ENCODE measurements at regions of chr16 and their contacts with region 1.

Region 1: GRCh38 chr16:66382171-66382965 is 15.9 kb downstream of the CDH5 start:
- DNase-seq: peak in 3 of 5 donors; percentile 50 to 64 (median 60)
- ATAC-seq: peak; percentile 53 to 91 (median 76)
- H3K4me3 ChIP-seq: peak overlapping the region in 4 of 12 donors; percentile 3 to 6 (median 4)
- H3K27ac ChIP-seq: peak overlapping the region; percentile 59 to 88 (median 80)
- H3K4me1 ChIP-seq: peaks cover 0 to 51% (median 23%) of the 10 kb centered on the region in 12 donors
- H3K27me3 ChIP-seq: no peaks in the 10 kb centered on the region
- CTCF ChIP-seq: peak in 4 of 12 donors; percentile 13 to 19 (median 18)
- POLR2A ChIP-seq: no peak

Region 2: DNA sequence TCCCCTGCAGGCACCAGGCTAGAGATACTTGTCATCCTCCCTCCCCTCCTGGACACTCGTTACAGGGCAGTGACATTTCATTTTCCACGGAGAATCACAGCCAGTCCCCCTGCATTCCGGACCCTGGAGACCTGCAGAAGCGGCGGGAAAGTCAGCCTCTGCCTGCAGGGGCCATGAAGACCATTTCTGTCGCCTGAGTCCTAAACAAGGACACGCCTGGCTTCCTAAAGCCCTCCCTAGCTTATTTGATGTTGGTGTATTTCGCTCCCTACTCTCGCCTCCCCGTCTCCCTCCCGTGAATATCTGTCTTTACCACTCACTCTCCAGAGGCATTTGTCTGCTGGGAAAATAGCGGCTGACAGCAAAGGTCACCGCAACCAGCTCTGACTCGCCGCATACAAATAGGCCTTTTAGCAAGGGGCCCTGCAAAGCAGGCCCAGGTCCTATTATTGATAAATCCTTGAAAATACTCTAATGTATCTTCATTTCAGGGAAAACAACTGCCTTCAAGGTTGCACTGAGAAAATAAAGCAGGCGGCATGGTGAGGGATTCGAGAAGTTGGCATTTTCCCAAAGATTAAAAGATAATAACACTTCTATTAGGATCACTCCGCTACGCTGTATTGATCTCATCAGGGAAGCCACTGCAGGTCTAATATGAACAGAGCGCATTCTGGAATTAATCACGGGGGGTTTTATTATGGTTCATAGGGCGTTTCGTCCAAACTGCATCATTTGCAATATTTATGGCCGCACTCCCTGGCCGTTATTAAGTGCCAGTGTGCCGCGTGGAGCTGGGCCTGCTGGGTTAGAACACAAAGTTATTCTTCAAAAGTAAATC is 463.0 kb before region 1 on chr16:
- intact Hi-C with region 1: no loop called
- DNase-seq: no peak
- ATAC-seq: no peak
- H3K4me3 ChIP-seq: no peak overlapping the region
- H3K27ac ChIP-seq: no peak overlapping the region
- H3K4me1 ChIP-seq: no peaks in the 10 kb centered on the region
- H3K27me3 ChIP-seq: peaks cover 0 to 24% (median 0%) of the 10 kb centered on the region in 9 donors
- CTCF ChIP-seq: no peak
- POLR2A ChIP-seq: no peak

Region 3: DNA sequence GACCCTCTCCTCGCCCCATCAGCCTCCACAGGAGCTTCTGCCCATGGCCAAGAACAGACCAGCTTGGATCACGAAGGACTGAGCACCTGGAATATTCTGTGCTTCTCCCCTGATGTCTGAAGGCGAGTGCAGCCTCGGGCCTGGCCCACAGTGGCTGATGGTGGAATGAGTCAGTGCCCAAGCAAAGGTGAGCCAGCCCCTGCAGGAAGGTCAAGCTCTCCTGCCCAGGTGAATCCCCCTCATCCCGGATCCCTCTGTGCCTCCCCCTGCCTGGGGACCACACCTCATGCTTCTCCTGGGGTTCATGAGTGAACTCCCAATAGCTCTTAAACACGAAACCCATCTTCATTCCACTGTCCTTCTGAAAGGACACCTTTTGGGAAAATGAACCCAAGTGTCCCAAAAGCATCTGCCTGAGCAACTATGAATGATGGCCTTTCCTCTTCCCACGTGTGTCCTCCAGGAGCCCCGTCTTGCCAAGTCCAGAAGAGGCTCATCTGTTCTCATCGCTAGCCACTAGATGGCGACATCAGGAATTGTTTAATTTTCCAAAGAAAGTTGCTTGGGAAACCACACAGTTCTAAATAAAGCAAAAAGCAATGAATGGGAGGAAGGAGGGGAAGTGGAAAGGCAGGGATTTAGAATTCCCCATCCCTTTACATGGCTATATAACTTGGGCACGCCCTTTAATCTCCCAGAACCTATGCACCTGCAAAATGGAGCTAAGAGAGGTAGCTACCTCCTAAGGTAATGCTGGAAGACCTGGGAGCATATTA is 25.0 kb before region 1 on chr16:
- intact Hi-C with region 1: loop called in 1 of 10 experiments (anchors 1 kb)
- DNase-seq: peak in 3 of 5 donors; percentile 59 to 72 (median 62)
- ATAC-seq: peak in 3 of 4 donors; percentile 24 to 38 (median 31)
- H3K4me3 ChIP-seq: no peak overlapping the region
- H3K27ac ChIP-seq: peak overlapping the region in 4 of 12 donors; percentile 13 to 82 (median 28)
- H3K4me1 ChIP-seq: peaks cover 6 to 50% (median 36%) of the 10 kb centered on the region in 12 donors
- H3K27me3 ChIP-seq: peaks cover 0 to 16% (median 0%) of the 10 kb centered on the region in 9 donors
- CTCF ChIP-seq: peak; percentile 61 to 83 (median 77)
- POLR2A ChIP-seq: no peak